HCT116 (cell line): ENCODE measurements at regions of chr5 and their contacts with region 1.

Region 1: GRCh38 chr5:154754460-154755360 is 467 bp upstream of the LARP1 start:
- DNase-seq: peak; percentile 97
- ATAC-seq: peak; percentile 88
- H3K4me3 ChIP-seq: peak overlapping the region; percentile 90 to 92
- H3K27ac ChIP-seq: peak overlapping the region; percentile 95
- H3K4me1 ChIP-seq: peaks cover 19 to 42% of the 10 kb centered on the region in 2 experiments
- H3K27me3 ChIP-seq: no peaks in the 10 kb centered on the region
- CTCF ChIP-seq: peak in 2 of 3 experiments; percentile 22 to 32; a peak in 2 of 6 replicates
- POLR2A ChIP-seq: peak; percentile 52
- RAD21 ChIP-seq: no peak

Region 2: GRCh38 chr5:154683101-154683880 is 71.4 kb before region 1 on chr5:
- CTCF ChIA-PET with region 1: no interaction called
- POLR2A ChIA-PET with region 1: no interaction called
- RAD21 ChIA-PET with region 1: interaction called in 1 of 2 experiments, 5 read pairs
- intact Hi-C with region 1: loop called (anchors 1 kb)
- DNase-seq: no peak
- ATAC-seq: peak; percentile 43
- H3K4me3 ChIP-seq: peak overlapping the region; percentile 34 to 47
- H3K27ac ChIP-seq: peak overlapping the region; percentile 78
- H3K4me1 ChIP-seq: peaks cover 16 to 27% of the 10 kb centered on the region in 2 experiments
- H3K27me3 ChIP-seq: no peaks in the 10 kb centered on the region
- CTCF ChIP-seq: no peak
- POLR2A ChIP-seq: no peak
- RAD21 ChIP-seq: no peak

Region 3: GRCh38 chr5:154712518-154713381 is 42.0 kb before region 1 on chr5:
- CTCF ChIA-PET with region 1: no interaction called
- POLR2A ChIA-PET with region 1: no interaction called
- RAD21 ChIA-PET with region 1: no interaction called
- intact Hi-C with region 1: loop called (anchors 2 kb)
- DNase-seq: peak; percentile 46
- ATAC-seq: peak; percentile 94
- H3K4me3 ChIP-seq: peak overlapping the region; percentile 55 to 66
- H3K27ac ChIP-seq: peak overlapping the region; percentile 58
- H3K4me1 ChIP-seq: peaks cover 28 to 54% of the 10 kb centered on the region in 2 experiments
- H3K27me3 ChIP-seq: no peaks in the 10 kb centered on the region
- CTCF ChIP-seq: no peak
- POLR2A ChIP-seq: no peak
- RAD21 ChIP-seq: no peak; the same call in 1 of the 2 replicates